ENCODE measurements at regions of chr7 and their contacts with region 1.

Region 1: DNA sequence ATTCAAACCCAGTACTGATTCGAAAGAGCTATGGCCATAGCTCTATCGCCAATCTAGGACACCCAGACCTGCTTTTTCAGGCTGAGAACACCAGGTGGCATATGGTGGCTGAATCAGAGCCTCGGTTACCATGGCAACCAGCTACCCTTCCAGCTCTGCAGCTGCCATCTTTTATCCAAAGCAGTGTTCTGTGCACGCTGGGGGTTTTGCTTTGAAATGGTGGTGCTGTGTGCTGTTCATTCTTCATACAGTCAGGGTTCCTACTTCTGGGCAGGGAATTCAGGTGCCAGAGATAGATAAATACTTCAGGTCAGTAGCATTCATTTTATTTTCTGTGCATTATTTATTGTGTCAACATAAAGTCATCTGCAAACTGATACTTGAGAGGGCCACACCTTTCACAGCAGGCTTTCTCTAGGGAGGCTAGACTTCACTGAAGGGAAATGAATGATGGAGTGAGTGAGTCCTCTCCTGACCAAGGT is 85.4 kb downstream of the AKR1D1 start:
- DNase-seq: peak; percentile 63
- ATAC-seq: peak; percentile 79

Region 2: GRCh38 chr7:137934941-137935883 is 226.4 kb before region 1 on chr7:
- intact Hi-C with region 1: no loop called
- DNase-seq: no peak
- ATAC-seq: no peak

Region 3: DNA sequence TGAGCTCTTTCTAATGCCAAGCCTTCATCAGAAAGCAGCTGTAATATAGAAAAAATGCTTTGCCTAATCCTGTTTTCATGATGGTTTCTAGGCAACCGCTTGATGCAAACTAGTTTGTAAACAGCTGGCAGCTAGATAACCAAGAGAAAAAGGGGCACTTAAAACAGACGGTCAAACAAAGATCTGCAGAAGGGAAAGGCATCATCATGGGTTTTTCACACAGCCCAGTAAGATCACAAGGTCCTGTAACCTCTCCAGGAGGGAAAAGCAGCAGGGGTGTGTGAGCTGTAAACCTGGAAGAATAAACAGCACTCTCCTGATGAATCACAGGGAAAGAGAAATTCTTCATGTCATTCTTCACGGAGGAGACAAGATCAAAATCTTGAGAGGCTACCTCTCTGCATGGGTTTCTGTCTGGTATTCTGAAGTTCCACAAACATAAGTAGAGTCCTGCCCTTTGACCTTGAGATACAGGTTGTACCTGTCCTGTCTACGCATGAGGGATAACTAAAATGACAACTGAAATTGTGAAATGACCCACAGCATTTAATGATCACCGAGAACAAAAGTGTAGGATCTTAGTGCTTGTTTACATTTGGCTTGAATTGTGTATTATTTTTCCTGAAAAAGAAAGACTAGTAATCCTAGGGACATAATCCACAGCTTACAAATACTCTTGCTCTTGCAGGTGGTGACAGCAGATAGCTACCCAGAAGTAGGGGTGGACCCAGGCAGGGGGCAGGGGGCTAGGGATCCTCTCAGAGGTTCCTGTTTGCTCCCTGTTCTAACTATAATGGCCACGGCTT is 207.8 kb before region 1 on chr7:
- intact Hi-C with region 1: no loop called
- DNase-seq: no peak
- ATAC-seq: no peak

Region 4: DNA sequence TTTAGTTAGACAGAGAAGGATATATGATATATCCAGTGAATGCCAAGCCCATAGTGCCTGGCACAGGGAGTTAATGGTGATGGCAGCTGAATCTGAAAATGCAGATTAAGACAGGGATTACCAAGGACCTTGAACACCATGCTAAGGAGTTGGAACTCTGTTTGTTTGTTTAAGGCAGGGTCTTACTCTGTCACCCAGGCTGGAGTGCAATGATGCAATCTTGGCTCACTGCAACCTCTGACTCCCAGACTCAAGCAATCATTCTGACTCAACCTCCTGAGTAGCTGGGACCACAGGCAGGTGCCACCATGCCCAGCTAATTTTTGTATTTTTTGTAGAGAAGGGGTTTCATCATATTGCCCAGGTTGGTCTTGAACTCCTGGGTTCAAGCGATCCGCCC is 83.8 kb before region 1 on chr7:
- intact Hi-C with region 1: no loop called
- DNase-seq: no peak
- ATAC-seq: no peak

Region 5: GRCh38 chr7:138738551-138739335 is 577.1 kb after region 1 on chr7:
- intact Hi-C with region 1: loop called (anchors 2 kb)
- DNase-seq: peak; percentile 90
- ATAC-seq: peak; percentile 79

Measured in left ventricle myocardium superior (tissue), 1 donor.